ENCODE measurements at regions of chr20 and their contacts with region 1.

Region 1: DNA sequence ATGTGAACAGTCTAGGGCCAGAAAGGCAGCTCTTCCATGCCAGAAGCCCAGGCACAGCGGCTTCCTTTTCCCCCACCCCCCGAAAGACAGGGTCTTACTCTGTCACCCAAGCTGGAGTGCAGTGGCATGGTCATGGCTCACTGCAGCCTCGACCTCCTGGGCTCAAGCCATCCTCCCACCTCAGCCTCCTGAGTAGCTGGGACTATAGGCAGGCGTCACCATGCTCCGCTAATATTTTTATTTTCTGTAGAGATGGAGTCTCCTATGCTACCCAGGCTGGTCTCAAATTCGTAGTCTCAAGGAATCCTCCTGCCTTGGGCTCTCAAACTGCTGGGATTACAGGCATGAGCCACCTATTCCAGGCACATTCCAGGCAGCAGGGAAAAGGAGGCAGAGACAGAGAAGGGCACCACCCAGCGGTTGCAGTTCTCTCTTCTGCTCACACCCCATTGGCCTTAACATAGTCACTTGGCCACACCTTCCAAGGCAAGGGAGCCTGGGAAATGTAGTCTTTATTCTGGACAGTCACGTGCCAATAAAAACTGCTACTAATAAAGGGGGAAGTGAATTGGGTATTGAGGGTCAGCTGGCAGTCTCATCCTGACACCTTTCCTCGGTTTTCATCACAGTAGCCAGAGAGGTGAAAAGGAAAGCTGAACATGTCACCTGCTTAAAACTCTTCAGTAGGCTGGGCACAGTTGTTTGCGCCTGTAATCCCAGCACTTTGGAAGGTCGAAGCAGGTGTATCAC is 205.9 kb downstream of the ZMYND8 start:
- DNase-seq: peak; percentile 61 to 81 (median 79)
- H3K4me3 ChIP-seq: no peak overlapping the region
- H3K4me3 Mint-ChIP-seq: no peak overlapping the region
- H3K27ac ChIP-seq: no peak overlapping the region
- H3K27ac Mint-ChIP-seq: peak overlapping the region in 1 of 7 donors; percentile 4
- H3K4me1 ChIP-seq: peaks cover 14 to 21% of the 10 kb centered on the region in 2 donors
- H3K4me1 Mint-ChIP-seq: peaks cover 33% of the 10 kb centered on the region
- H3K27me3 ChIP-seq: no peaks in the 10 kb centered on the region
- H3K27me3 Mint-ChIP-seq: peaks cover 7 to 10% (median 9%) of the 10 kb centered on the region in 3 donors
- CTCF ChIP-seq: peak; percentile 74

Region 2: DNA sequence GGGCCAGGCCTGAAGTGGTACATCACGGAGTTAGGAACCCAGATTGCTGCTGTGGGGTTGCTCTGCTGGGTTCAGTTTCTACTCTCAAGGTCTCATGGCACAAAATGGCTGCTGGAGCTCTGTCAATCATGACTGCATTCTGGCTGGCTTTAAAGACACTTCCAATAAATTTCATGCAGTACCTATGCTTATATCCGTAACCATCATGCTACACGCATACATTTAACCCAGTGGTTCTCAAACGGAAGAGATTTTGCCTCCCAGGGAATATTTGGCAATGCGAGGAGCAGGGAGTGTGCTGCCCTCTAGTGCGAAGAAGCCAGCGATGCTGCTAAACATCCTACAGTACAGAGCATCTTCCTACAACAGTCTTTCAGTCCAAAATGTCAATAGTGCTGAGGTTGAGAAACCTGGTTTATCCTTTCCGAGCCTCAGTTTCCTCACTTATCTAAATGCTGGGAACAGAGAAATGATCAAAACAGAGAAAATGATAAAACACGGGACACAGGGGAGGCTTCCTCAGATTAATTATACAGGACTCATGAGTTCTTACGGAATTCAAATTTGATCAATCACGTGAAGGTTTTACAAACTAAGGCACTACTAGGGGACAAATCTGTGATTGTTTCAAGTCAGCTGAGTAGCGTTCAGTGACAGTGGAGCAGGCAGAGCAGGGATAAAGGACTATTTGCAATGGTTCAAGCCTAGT is 450.8 kb before region 1 on chr20:
- intact Hi-C with region 1: loop called in 1 of 2 experiments (anchors 5 kb)
- DNase-seq: peak in 2 of 3 donors; percentile 14 to 16
- H3K4me3 ChIP-seq: no peak overlapping the region
- H3K4me3 Mint-ChIP-seq: no peak overlapping the region
- H3K27ac ChIP-seq: no peak overlapping the region
- H3K27ac Mint-ChIP-seq: no peak overlapping the region
- H3K4me1 ChIP-seq: no peaks in the 10 kb centered on the region
- H3K4me1 Mint-ChIP-seq: peaks cover 6% of the 10 kb centered on the region
- H3K27me3 ChIP-seq: no peaks in the 10 kb centered on the region
- H3K27me3 Mint-ChIP-seq: peaks cover 0 to 3% (median 1%) of the 10 kb centered on the region in 3 donors
- CTCF ChIP-seq: peak; percentile 69

Region 3: GRCh38 chr20:46757754-46758678 is 392.6 kb before region 1 on chr20:
- intact Hi-C with region 1: loop called in 1 of 2 experiments (anchors 2 kb)
- DNase-seq: peak; percentile 14 to 47 (median 44)
- H3K4me3 ChIP-seq: no peak overlapping the region
- H3K4me3 Mint-ChIP-seq: no peak overlapping the region
- H3K27ac ChIP-seq: no peak overlapping the region
- H3K27ac Mint-ChIP-seq: no peak overlapping the region
- H3K4me1 ChIP-seq: no peaks in the 10 kb centered on the region
- H3K4me1 Mint-ChIP-seq: peaks cover 3% of the 10 kb centered on the region
- H3K27me3 ChIP-seq: no peaks in the 10 kb centered on the region
- H3K27me3 Mint-ChIP-seq: peaks cover 5 to 10% (median 5%) of the 10 kb centered on the region in 3 donors
- CTCF ChIP-seq: peak; percentile 95

Region 4: GRCh38 chr20:46767127-46767761 is 383.3 kb before region 1 on chr20:
- intact Hi-C with region 1: loop called in 1 of 2 experiments (anchors 5 kb)
- DNase-seq: peak; percentile 4 to 31 (median 28)
- H3K4me3 ChIP-seq: no peak overlapping the region
- H3K4me3 Mint-ChIP-seq: no peak overlapping the region
- H3K27ac ChIP-seq: no peak overlapping the region
- H3K27ac Mint-ChIP-seq: no peak overlapping the region
- H3K4me1 ChIP-seq: no peaks in the 10 kb centered on the region
- H3K4me1 Mint-ChIP-seq: no peaks in the 10 kb centered on the region
- H3K27me3 ChIP-seq: no peaks in the 10 kb centered on the region
- H3K27me3 Mint-ChIP-seq: peaks cover 4 to 15% (median 7%) of the 10 kb centered on the region in 3 donors
- CTCF ChIP-seq: peak; percentile 81

Region 5: GRCh38 chr20:47113362-47114109 is 37.0 kb before region 1 on chr20:
- intact Hi-C with region 1: loop called (anchors 5 kb)
- DNase-seq: no peak
- H3K4me3 ChIP-seq: no peak overlapping the region
- H3K4me3 Mint-ChIP-seq: no peak overlapping the region
- H3K27ac ChIP-seq: no peak overlapping the region
- H3K27ac Mint-ChIP-seq: peak overlapping the region in 2 of 7 donors; percentile 50 to 56
- H3K4me1 ChIP-seq: peaks cover 6 to 9% of the 10 kb centered on the region in 2 donors
- H3K4me1 Mint-ChIP-seq: peaks cover 10% of the 10 kb centered on the region
- H3K27me3 ChIP-seq: peaks cover 0 to 3% of the 10 kb centered on the region in 2 donors
- H3K27me3 Mint-ChIP-seq: peaks cover 15 to 33% (median 30%) of the 10 kb centered on the region in 3 donors
- CTCF ChIP-seq: no peak

Region 6: GRCh38 chr20:47118641-47119040 is 31.9 kb before region 1 on chr20:
- intact Hi-C with region 1: loop called (anchors 5 kb)
- DNase-seq: peak; percentile 34 to 43 (median 36)
- H3K4me3 ChIP-seq: peak overlapping the region in 1 of 3 experiments; percentile 11
- H3K4me3 Mint-ChIP-seq: peak overlapping the region in 1 of 2 donors; percentile 82
- H3K27ac ChIP-seq: peak overlapping the region in 1 of 2 donors; percentile 10
- H3K27ac Mint-ChIP-seq: peak overlapping the region in 5 of 7 donors; percentile 33 to 74 (median 52)
- H3K4me1 ChIP-seq: peaks cover 15 to 16% of the 10 kb centered on the region in 2 donors
- H3K4me1 Mint-ChIP-seq: peaks cover 18% of the 10 kb centered on the region
- H3K27me3 ChIP-seq: peaks cover 0 to 3% of the 10 kb centered on the region in 2 donors
- H3K27me3 Mint-ChIP-seq: peaks cover 15 to 33% (median 32%) of the 10 kb centered on the region in 3 donors
- CTCF ChIP-seq: no peak

Region 7: GRCh38 chr20:47129306-47129705 is 21.3 kb before region 1 on chr20:
- intact Hi-C with region 1: no loop called
- DNase-seq: no peak
- H3K4me3 ChIP-seq: no peak overlapping the region
- H3K4me3 Mint-ChIP-seq: no peak overlapping the region
- H3K27ac ChIP-seq: no peak overlapping the region
- H3K27ac Mint-ChIP-seq: peak overlapping the region in 2 of 7 donors; percentile 32 to 70
- H3K4me1 ChIP-seq: peaks cover 30 to 34% of the 10 kb centered on the region in 2 donors
- H3K4me1 Mint-ChIP-seq: peaks cover 37% of the 10 kb centered on the region
- H3K27me3 ChIP-seq: no peaks in the 10 kb centered on the region
- H3K27me3 Mint-ChIP-seq: peaks cover 5 to 18% (median 5%) of the 10 kb centered on the region in 3 donors
- CTCF ChIP-seq: no peak

Region 8: DNA sequence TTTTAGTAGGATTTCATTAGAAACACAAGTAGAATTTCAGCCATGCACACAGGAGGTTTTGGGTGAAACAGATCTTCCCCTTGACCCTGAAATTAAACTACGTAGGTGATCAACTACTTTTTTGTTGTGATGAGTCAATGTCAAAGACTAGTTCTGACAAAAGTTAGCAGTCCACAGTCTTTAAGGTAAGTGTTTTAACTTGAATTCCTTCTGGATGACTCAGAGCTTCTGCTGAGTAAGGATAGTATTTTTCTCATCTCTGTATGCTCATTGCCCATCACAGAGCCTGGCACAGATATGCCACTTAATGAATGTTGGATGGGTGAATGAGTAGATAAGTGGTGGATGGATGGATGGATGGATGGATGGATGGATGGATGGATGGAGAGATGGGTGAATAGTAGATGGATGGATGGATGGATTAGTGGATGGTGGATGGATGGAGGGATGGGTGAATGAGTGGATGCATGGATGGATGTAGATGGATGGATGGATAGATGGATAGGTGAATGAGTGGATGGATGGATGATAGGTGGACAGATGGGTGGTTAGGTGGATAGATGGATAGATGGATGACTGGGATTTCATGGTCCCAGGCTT is 40.6 kb after region 1 on chr20:
- intact Hi-C with region 1: no loop called
- DNase-seq: no peak
- H3K4me3 ChIP-seq: no peak overlapping the region
- H3K4me3 Mint-ChIP-seq: no peak overlapping the region
- H3K27ac ChIP-seq: no peak overlapping the region
- H3K27ac Mint-ChIP-seq: no peak overlapping the region
- H3K4me1 ChIP-seq: no peaks in the 10 kb centered on the region
- H3K4me1 Mint-ChIP-seq: peaks cover 1% of the 10 kb centered on the region
- H3K27me3 ChIP-seq: peaks cover 0 to 4% of the 10 kb centered on the region in 2 donors
- H3K27me3 Mint-ChIP-seq: peaks cover 0 to 15% (median 9%) of the 10 kb centered on the region in 3 donors
- CTCF ChIP-seq: no peak